HEK293 (cell line): ENCODE measurements at regions of chr1 and their contacts with region 1.

Region 1: DNA sequence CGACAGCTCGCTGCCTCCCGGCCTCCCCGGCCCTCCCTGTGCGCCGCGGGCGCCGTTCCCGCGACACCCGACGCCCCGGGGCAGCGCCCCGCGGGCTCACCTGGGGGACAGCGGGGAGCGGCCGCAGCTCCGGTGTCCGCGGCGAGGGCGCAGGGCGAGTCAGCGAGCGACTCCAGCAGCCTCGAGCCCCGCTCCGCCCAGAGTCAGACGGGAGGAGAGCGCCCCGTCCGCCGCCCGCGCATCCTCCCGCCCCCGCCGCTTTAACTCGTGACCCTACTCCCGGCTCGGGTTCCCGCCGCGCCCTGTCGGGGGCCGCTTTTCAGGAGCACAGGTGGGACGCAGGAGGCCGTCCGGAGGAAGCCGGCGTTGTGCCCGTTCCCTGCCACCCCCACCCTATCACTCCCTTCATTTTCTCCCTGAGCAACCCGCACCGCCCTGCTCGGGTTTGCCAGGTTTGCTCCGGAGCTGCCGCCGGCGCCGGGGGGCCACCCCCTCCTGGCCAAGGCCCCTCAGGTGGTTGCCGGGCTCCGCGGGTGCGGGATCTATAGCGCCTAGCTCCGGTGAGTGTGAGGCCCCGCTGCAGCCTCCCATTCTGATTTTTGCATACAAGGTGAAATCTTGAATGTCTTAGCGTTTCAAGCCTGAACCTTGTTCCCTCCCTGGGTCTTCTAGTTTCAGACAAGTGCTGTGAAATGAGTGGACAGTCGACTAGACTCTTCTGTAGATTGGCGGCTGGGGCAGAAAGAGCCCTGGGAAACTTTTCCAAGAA is at the start of gene MCOLN3:
- H3K4me3 ChIP-seq: peak within 1 kb of the TSS; percentile 62
- H3K27ac ChIP-seq: peak within 1 kb of the TSS; percentile 85
- H3K4me1 ChIP-seq: peaks cover 8% of the 10 kb centered on the region
- CTCF ChIP-seq: peak; percentile 60

Region 2: GRCh38 chr1:85061711-85062424 is 13.4 kb after region 1 on chr1:
- CTCF ChIA-PET with region 1: interaction called, 3 read pairs
- POLR2A ChIA-PET with region 1: interaction called, 14 read pairs
- H3K4me3 ChIP-seq: peak overlapping the region; percentile 45
- H3K27ac ChIP-seq: peak overlapping the region; percentile 3; the same call in 1 of the 2 replicates
- H3K4me1 ChIP-seq: peaks cover 5% of the 10 kb centered on the region; the same call in 1 of the 2 replicates
- CTCF ChIP-seq: no peak